CD8-positive, alpha-beta T cell (primary cell): ENCODE measurements at regions of chr5 and their contacts with region 1.

Region 1: GRCh38 chr5:111119856-111120255 is 27.7 kb downstream of the WDR36 start:
- DNase-seq: no peak
- ATAC-seq: no peak
- H3K4me3 ChIP-seq: no peak overlapping the region
- H3K4me3 Mint-ChIP-seq: no peak overlapping the region
- H3K27ac ChIP-seq: no peak overlapping the region
- H3K27ac Mint-ChIP-seq: no peak overlapping the region
- H3K4me1 ChIP-seq: no peaks in the 10 kb centered on the region
- H3K4me1 Mint-ChIP-seq: peaks cover 4% of the 10 kb centered on the region
- H3K27me3 ChIP-seq: no peaks in the 10 kb centered on the region
- H3K27me3 Mint-ChIP-seq: no peaks in the 10 kb centered on the region
- CTCF ChIP-seq: no peak

Region 2: GRCh38 chr5:110150199-110150598 is 969.7 kb before region 1 on chr5:
- CTCF ChIA-PET with region 1: no interaction called
- POLR2A ChIA-PET with region 1: no interaction called
- intact Hi-C with region 1: no loop called
- DNase-seq: no peak
- ATAC-seq: no peak
- H3K4me3 ChIP-seq: no peak overlapping the region
- H3K4me3 Mint-ChIP-seq: no peak overlapping the region
- H3K27ac ChIP-seq: no peak overlapping the region
- H3K27ac Mint-ChIP-seq: no peak overlapping the region
- H3K4me1 ChIP-seq: no peaks in the 10 kb centered on the region
- H3K4me1 Mint-ChIP-seq: peaks cover 10% of the 10 kb centered on the region
- H3K27me3 ChIP-seq: no peaks in the 10 kb centered on the region
- H3K27me3 Mint-ChIP-seq: peaks cover 2% of the 10 kb centered on the region
- CTCF ChIP-seq: no peak

Region 3: DNA sequence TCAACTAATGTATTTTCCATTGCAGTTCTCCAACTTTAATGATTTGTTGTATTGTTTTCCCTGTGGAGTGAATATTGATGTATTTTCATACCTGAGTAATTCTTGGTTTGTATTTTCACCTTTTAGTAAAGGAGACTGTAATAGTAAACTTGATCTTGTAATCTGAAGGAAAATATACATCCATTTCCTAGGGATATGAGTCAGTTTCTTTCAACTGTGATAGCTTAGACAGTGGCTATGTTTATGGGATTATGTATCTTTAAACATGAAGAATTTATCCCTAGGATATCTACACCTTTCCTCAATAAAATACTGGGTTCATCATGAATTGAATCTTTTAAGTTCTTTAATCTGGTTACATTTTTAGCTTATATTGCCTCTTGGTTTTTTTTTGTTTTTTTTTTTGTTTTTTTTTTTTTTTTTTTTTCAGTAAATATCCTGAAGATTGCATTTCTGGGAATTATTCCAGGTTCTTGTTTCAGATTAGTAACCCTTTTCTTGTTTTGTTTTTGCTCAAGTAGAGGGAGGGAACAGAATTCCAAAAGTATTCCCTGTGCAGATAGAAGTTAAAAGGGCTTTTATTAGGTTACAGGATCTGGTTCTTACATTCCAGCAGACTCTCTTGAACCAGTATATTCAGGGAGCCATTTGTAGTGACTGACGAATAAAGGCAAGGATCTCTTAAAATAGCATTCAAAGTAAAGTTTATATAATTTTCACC is 20.6 kb before region 1 on chr5:
- CTCF ChIA-PET with region 1: no interaction called
- POLR2A ChIA-PET with region 1: no interaction called
- intact Hi-C with region 1: loop called in 1 of 2 experiments (anchors 2 kb)
- DNase-seq: no peak
- ATAC-seq: no peak
- H3K4me3 ChIP-seq: no peak overlapping the region
- H3K4me3 Mint-ChIP-seq: no peak overlapping the region
- H3K27ac ChIP-seq: no peak overlapping the region
- H3K27ac Mint-ChIP-seq: no peak overlapping the region
- H3K4me1 ChIP-seq: peaks cover 5% of the 10 kb centered on the region
- H3K4me1 Mint-ChIP-seq: peaks cover 23% of the 10 kb centered on the region
- H3K27me3 ChIP-seq: no peaks in the 10 kb centered on the region
- H3K27me3 Mint-ChIP-seq: no peaks in the 10 kb centered on the region
- CTCF ChIP-seq: no peak